Common myeloid progenitor, CD34-positive (primary cell): ENCODE measurements at regions of chr14 and their contacts with region 1.

Region 1: DNA sequence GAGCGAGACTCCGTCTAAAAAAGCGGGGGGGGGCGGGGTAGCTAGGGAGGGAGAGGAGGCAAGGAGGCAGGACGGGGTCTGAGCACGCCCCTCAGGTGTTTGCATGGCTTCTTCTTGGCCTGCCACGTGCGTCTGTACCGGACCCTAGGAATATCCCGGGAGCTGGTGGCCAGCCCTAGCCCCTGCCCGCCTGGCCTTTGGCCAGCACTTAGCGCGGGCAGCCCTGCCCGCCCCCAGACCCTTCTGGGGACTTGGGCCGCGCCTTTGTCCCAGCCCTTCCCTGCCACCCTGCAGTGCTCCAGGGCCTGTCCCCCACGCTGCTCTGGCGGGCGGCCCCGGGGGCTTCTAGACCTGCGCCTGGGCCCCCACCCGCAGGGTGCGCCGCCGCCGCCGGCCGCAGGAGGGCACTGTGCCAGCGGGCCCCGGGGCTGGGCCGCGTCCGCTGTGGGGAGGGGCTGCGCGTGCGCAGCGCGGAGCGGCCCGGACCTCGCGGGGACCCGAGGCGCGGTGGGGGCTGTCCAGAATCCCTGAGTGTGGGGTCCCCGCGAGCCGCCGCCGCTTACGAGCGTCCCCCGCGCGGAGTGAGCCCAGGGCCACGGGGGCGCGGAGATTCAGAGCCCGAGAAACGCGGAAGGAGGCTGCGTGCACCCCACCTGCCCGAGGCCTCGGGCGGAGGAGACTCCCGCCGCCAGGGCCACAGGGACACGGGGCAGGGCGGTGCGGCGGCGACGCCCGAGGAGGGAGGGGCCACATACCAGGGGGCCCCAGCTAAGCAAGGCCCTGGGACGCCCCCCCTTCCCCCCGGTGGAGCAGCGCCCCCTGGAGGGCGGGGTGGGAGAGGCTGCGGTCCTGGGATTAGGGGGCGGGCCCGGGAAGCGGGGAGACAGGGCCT is 21.0 kb downstream of the SLC25A29 start:
- DNase-seq: peak; percentile 74 to 87 (median 85)
- H3K4me3 ChIP-seq: peak overlapping the region; percentile 56 to 84 (median 71)
- H3K27ac ChIP-seq: peak overlapping the region; percentile 50 to 82
- H3K4me1 ChIP-seq: peaks cover 0 to 13% (median 11%) of the 10 kb centered on the region in 4 experiments
- H3K27me3 ChIP-seq: no peaks in the 10 kb centered on the region

Region 2: GRCh38 chr14:100271247-100271939 is 13.9 kb before region 1 on chr14:
- CTCF ChIA-PET with region 1: interaction called, 13 read pairs
- POLR2A ChIA-PET with region 1: no interaction called
- DNase-seq: peak; percentile 37 to 58 (median 48)
- H3K4me3 ChIP-seq: no peak overlapping the region
- H3K27ac ChIP-seq: no peak overlapping the region
- H3K4me1 ChIP-seq: peaks cover 2 to 13% (median 9%) of the 10 kb centered on the region in 4 experiments
- H3K27me3 ChIP-seq: no peaks in the 10 kb centered on the region

Region 3: GRCh38 chr14:100297302-100298300 is 12.3 kb after region 1 on chr14:
- CTCF ChIA-PET with region 1: interaction called, 59 read pairs
- POLR2A ChIA-PET with region 1: interaction called, 5 read pairs
- DNase-seq: peak; percentile 62 to 91 (median 87)
- H3K4me3 ChIP-seq: peak overlapping the region in 3 of 7 experiments; percentile 1 to 26 (median 13)
- H3K27ac ChIP-seq: peak overlapping the region in 1 of 2 experiments; percentile 52
- H3K4me1 ChIP-seq: peaks cover 3 to 30% (median 23%) of the 10 kb centered on the region in 4 experiments
- H3K27me3 ChIP-seq: no peaks in the 10 kb centered on the region

Region 4: GRCh38 chr14:100306420-100307219 is 21.4 kb after region 1 on chr14 and contains the start of gene SLC25A29:
- CTCF ChIA-PET with region 1: interaction called, 28 read pairs
- POLR2A ChIA-PET with region 1: interaction called, 3 read pairs
- DNase-seq: peak; percentile 77 to 90 (median 86)
- H3K4me3 ChIP-seq: peak within 1 kb of the TSS; percentile 76 to 91 (median 83)
- H3K27ac ChIP-seq: peak within 1 kb of the TSS; percentile 15 to 74
- H3K4me1 ChIP-seq: peaks cover 0 to 65% (median 59%) of the 10 kb centered on the region in 4 experiments
- H3K27me3 ChIP-seq: no peaks in the 10 kb centered on the region

Region 5: GRCh38 chr14:100375963-100376735 is 90.9 kb after region 1 on chr14:
- CTCF ChIA-PET with region 1: interaction called, 17 read pairs
- POLR2A ChIA-PET with region 1: no interaction called
- DNase-seq: peak; percentile 91 to 94 (median 92)
- H3K4me3 ChIP-seq: peak within 1 kb of the TSS; percentile 67 to 95 (median 82)
- H3K27ac ChIP-seq: peak within 1 kb of the TSS; percentile 79 to 90
- H3K4me1 ChIP-seq: peaks cover 14 to 43% (median 30%) of the 10 kb centered on the region in 4 experiments
- H3K27me3 ChIP-seq: no peaks in the 10 kb centered on the region